ENCODE measurements at regions of chr11 and their contacts with region 1.

Region 1: DNA sequence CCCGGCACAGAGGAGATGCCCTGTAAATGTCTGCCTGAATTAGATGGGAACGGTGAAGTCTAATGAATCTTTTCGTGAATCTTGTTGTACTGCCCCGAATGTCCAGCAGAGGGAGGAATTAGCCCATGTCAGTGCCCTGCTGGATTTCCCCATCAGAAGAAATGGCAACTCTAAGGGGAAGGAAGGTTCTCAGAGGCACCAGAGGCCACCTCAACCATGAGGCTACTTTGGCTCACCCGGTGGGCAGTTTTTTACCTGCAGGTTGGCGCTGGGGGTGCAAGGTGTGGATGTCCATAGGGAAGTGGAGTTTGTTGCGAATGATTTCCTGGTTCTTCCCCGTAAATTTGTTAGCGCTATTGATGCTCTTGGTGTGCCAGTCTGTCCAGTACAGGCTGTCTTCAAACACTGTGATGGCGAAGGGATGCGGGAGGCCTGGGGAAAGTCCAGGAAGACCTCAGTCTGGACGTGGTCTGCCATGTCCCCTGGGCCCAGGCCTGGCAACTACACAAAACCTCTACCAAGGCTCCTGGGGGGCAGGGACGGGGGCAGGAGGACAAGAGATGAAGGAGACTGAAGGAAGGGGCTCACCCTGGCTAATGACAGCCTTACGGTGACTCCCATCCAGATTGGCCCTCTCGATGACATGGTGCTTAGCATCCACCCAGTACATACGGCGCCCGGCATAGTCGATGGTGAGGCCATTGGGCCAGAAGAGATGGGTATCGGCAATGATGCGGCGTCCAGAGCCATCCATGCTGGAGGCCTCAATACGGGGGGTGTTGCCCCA is 28.5 kb downstream of the LRP4 start:
- DNase-seq: peak; percentile 74 to 77
- H3K4me3 ChIP-seq: no peak overlapping the region
- H3K27ac ChIP-seq: no peak overlapping the region
- H3K4me1 ChIP-seq: no peaks in the 10 kb centered on the region
- H3K27me3 ChIP-seq: no peaks in the 10 kb centered on the region
- CTCF ChIP-seq: peak; percentile 83 to 90

Region 2: DNA sequence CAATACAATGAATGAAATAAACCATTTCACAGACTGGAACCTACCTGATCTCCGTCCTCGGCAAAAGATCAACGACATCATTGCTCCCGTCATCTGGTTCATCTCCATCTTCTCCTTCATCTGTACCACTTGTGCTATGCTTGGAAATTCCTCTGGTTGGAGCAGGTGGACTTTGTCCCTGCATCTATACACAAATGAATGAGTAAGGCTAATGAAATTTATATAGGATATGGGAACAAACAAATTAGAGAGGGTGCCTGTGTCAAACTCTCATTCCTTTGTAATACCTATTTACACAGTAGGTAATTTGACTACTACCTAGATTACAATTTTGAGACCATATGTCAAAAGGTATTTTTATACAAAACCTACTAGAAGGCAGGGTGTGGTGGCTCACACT is 111.5 kb before region 1 on chr11:
- intact Hi-C with region 1: no loop called
- DNase-seq: no peak
- H3K4me3 ChIP-seq: no peak overlapping the region
- H3K27ac ChIP-seq: no peak overlapping the region
- H3K4me1 ChIP-seq: no peaks in the 10 kb centered on the region
- H3K27me3 ChIP-seq: no peaks in the 10 kb centered on the region
- CTCF ChIP-seq: no peak

Region 3: DNA sequence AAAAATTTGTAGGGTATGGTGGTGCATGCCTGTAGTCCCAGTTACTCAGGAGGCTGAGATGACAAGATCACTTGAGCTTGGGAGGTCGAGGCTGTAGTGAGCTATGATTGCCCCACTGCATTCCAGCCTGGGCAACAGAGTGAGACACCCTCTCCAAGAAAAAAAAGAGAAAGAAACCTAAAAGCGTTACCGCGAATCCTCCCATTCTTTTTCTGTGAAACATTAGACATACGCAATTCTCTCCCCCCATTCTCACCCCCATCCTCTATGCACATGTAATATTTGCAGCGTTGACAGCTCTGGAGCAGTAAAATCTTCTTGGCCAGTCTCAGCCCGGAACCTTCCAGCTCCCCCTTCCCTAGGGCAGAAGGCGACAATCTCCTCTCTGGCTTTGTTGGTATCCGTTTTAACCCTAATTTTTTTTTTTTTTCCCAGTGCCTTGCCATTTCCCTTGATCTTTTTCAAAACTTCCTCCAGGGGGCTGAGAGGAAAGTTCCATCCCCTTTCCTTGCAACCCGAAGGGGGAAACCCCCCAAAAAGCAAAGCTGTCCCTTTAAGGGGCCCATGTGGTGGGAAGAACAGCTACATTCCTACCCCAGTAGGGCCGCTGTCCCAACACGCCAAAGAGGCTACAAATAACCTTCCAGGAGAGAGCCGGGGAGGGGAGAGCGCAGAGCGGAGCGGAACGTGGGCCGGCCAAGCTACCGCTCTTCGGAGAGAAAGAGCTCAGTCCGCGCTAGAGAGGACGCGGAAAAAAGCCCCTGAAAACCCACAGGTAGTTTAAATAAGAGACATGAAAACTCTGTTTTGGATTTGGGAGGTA is 26.6 kb after region 1 on chr11:
- intact Hi-C with region 1: no loop called
- DNase-seq: peak in 1 of 2 donors; percentile 48
- H3K4me3 ChIP-seq: peak overlapping the region; percentile 53 to 58
- H3K27ac ChIP-seq: peak overlapping the region; percentile 42 to 61
- H3K4me1 ChIP-seq: peaks cover 0 to 53% (median 27%) of the 10 kb centered on the region in 4 donors
- H3K27me3 ChIP-seq: peaks cover 0 to 4% of the 10 kb centered on the region in 2 donors
- CTCF ChIP-seq: no peak

Region 4: GRCh38 chr11:47152953-47153950 is 263.4 kb after region 1 on chr11:
- intact Hi-C with region 1: loop called (anchors 2 kb)
- DNase-seq: peak; percentile 82 to 85
- H3K4me3 ChIP-seq: no peak overlapping the region
- H3K27ac ChIP-seq: no peak overlapping the region
- H3K4me1 ChIP-seq: peaks cover 0 to 17% (median 4%) of the 10 kb centered on the region in 4 donors
- H3K27me3 ChIP-seq: no peaks in the 10 kb centered on the region
- CTCF ChIP-seq: peak; percentile 93 to 94

Region 5: DNA sequence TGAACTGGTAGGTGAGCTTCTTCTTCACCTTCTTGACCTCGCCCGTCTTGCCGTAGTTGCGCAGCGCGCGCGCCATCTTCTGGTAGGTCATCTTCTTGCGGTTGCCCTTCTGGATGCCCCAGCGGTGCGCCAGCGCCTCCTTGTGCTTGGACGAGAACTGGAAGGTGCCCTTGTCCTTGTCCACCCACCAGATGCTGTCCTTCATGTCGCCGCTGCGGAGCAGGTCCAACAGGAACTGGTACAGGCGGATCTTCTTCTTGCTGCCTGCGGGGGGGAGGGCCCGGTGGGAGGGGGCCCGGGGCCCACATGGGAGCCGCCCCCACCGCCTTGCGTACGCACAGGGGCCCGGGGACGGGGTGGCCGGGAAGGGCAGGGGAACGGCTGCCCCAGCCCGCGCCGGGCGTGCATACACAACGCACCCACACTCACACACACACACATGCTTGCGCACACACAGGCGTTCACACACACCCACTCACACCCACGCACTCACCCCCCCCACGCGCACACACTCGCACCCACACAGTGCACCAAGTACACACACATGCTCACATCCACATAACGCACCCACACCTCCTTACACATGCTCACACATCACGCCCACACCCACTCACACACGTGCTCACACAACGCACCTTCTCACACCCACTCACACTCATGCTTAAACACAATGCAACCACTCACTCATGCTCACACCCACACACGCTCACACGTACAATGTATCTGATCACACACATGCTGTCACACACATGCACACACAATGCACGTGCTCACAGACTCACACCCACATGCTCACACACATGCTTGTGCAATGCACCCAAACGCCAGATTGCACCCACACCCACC is 465.6 kb after region 1 on chr11:
- intact Hi-C with region 1: loop called (anchors 10 kb)
- DNase-seq: peak; percentile 89 to 94
- H3K4me3 ChIP-seq: peak overlapping the region; percentile 38 to 54
- H3K27ac ChIP-seq: peak overlapping the region in 1 of 2 donors; percentile 39
- H3K4me1 ChIP-seq: peaks cover 0 to 11% (median 4%) of the 10 kb centered on the region in 4 donors
- H3K27me3 ChIP-seq: no peaks in the 10 kb centered on the region
- CTCF ChIP-seq: peak; percentile 94 to 95

Region 6: DNA sequence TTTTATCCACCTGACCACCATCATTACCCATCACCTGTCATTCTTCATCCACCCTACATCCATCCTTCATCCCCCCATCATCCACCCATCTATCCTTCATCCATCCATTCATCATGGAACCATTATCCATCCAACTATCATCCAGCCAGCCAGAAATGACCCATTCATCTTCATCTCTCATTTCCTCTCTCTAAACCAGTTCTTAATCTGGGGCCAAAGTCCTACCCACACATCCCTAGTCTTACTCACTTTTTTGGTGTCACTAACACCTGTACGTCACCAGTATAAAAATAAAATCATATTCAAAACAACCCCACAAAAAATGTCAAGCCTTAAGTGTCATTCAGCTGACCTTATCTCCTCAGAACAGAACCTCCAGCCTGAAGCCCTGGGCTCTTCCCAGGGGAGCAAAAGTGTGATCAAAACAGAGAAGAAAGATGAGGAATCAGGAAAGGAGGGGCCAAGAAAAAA is 476.2 kb after region 1 on chr11:
- intact Hi-C with region 1: no loop called
- DNase-seq: no peak
- H3K4me3 ChIP-seq: no peak overlapping the region
- H3K27ac ChIP-seq: no peak overlapping the region
- H3K4me1 ChIP-seq: no peaks in the 10 kb centered on the region
- H3K27me3 ChIP-seq: peaks cover 0 to 11% of the 10 kb centered on the region in 2 donors
- CTCF ChIP-seq: no peak